ENCODE measurements at regions of chr3 and their contacts with region 1.

Region 1: DNA sequence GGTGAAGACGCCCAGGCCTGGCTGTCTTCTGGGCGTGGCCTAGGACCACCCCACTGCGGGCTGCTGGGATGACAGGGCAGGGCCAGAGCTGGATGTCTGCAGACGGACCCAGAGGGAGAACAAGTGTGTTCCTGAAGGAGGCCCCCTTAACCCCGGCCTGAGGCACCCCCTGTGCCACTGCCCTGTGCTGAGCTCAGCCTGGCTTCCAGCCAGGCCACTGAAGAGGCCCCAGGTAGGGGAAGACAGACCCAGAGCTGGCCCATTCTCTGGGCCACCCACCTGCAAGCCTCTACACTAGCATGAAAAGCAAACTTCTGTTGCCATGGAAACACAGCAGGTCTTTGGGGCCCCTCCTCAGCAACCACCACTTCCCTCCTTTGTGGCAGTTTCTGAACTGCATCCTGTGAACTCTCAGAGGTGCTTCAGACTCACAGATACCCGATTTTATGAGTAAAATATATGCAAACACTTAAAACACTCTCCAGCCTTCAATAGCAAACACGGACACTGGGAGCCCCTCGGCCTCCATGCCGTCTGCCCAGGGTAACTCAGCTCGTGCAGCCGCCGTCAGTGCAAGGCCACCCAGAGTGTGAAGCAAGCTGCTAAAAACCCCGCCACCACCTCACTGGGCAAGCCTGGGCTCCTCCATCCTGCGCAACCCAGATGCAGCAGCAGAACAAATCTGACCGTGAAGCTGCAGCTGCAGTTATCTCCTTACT is 42.5 kb downstream of the CMTM6 start:
- DNase-seq: peak; percentile 80
- H3K4me3 Mint-ChIP-seq: peak overlapping the region; percentile 68
- H3K27ac Mint-ChIP-seq: peak overlapping the region; percentile 89
- H3K4me1 Mint-ChIP-seq: peaks cover 44% of the 10 kb centered on the region
- H3K27me3 Mint-ChIP-seq: no peaks in the 10 kb centered on the region

Region 2: DNA sequence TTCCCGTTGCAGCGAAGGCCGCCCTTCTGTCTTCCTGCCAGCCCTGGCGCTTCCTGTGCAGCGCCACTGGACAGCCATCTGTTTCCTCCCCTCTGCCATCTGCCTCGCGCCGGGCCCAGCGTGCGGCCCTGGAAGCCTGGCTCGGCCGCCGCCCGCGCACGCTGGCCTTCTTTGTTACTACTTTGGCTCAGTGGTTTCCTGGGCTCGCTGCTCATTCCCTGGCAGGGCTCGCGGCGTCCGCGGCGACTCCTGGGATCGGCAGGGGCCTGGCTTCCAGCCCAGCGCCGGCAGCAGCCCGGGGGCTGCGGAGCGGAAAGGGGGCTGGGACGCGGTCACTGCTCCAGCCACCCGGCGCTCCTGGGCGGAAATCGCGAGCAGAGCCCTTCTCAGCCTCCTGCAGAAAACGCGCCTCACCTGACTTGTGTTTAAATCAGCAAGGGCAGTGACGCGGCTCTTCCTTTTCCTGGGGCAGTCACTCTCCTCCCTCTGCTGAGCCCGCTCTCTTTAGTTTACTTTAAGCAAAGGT is 58.6 kb before region 1 on chr3:
- intact Hi-C with region 1: loop called (anchors 2 kb)
- DNase-seq: peak; percentile 51
- H3K4me3 Mint-ChIP-seq: peak overlapping the region; percentile 89
- H3K27ac Mint-ChIP-seq: peak overlapping the region; percentile 98
- H3K4me1 Mint-ChIP-seq: peaks cover 53% of the 10 kb centered on the region
- H3K27me3 Mint-ChIP-seq: no peaks in the 10 kb centered on the region

Region 3: GRCh38 chr3:32414520-32415202 is 45.5 kb before region 1 on chr3:
- intact Hi-C with region 1: loop called (anchors 2 kb)
- DNase-seq: peak; percentile 43
- H3K4me3 Mint-ChIP-seq: peak overlapping the region; percentile 15
- H3K27ac Mint-ChIP-seq: peak overlapping the region; percentile 83
- H3K4me1 Mint-ChIP-seq: peaks cover 59% of the 10 kb centered on the region
- H3K27me3 Mint-ChIP-seq: no peaks in the 10 kb centered on the region

Region 4: DNA sequence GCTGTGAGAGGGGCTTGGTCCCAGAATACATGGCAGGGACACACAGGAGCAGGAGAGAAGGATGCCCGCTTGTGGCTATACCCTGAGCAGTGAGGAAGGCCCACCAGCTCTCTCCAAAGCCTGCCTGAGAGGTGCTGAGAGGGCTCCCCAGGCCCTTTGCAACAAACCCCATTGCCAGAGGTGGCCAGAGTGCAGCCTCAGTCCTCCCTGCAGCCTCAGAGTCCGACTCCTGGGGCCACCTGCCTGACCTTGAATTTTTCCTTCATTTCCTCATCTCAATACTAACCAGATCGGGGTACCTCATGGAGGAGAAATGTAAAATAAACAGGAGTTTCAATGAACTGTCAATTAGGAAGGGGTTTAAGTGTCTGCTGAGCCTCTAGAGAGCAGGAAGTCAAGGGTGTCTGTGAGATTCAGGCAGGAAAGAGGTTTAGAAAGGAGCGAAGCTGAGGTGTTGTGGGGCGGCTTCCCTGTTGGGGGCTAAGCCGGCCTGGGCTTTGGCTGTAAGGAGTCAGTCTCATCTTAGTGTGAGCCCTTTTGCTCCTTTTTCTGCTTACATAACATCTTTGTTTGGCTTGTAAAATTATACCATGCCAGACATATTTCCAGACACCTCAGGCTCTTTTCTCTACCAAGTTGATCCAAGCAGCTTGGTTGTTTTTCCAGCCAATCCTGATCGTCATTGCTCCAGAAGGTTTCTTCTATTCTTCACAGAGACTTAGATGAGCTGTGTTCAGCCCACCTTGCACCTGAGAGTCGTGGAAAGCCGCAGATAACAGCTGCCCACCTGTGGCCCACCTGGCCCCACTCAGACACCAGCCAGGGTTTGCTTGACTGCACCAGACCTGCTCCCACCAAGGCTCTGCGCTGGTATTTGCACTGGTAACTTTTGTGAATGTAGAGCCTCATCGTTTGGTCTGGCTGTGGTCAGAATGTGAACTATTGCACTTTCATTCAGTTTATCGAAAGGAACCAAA is 31.8 kb before region 1 on chr3:
- intact Hi-C with region 1: loop called (anchors 2 kb)
- DNase-seq: no peak
- H3K4me3 Mint-ChIP-seq: peak overlapping the region; percentile 35
- H3K27ac Mint-ChIP-seq: peak overlapping the region; percentile 82
- H3K4me1 Mint-ChIP-seq: peaks cover 75% of the 10 kb centered on the region
- H3K27me3 Mint-ChIP-seq: no peaks in the 10 kb centered on the region